Sigmoid colon (tissue), 7 donors: ENCODE measurements at regions of chr1 and their contacts with region 1.

Region 1: DNA sequence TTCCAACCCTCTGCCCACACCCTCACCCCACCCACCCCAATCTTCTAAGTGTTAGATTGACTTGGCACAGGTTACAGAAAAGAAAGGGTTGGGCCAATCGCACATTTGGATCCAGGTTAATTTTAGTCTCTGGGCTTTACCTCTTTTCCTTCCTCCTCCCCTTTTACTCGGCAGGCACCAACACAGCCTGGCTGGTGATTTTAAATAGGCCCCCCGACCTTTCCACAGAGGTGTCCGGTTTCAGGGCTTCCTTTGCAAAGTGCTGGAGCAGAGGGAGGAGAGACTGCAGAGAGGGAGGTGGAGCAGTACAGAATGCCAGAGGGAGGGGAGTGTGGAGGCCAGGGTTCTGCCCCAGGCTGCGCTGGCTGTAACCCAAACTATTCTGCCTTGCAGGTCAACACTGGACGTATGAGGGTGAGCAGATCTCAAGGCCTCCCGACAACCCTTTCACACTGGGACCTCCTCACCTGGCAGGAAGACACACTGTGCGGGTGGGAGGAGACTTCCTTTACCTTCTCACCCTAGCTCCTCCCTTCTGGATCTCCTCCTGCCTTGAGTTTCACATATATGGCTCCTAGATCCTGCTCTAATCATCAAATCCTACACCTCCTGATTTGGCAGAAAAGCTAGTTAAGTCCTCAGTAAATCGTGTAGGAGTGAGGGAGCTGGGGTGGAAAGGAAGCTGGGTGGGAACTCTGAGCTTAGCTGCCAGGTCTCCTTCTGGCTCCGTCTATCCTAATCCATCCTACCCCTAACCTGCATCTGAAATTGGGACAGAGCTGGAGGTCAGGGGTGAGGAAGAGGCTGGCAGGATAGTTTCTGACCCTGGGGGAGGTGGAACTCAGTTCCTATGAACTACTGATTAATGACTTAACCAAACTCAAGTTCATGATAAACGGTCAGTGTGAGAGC is 2.4 kb downstream of the CA14 start:
- DNase-seq: peak; percentile 63
- H3K4me3 ChIP-seq: no peak overlapping the region
- H3K27ac ChIP-seq: peak overlapping the region in 3 of 4 donors; percentile 73 to 79 (median 76)
- H3K4me1 ChIP-seq: peaks cover 0 to 42% (median 14%) of the 10 kb centered on the region in 4 donors
- H3K27me3 ChIP-seq: peaks cover 0 to 14% (median 0%) of the 10 kb centered on the region in 3 donors
- CTCF ChIP-seq: no peak
- EP300 ChIP-seq: no peak
- POLR2A ChIP-seq: no peak

Region 2: GRCh38 chr1:150051089-150051373 is 209.0 kb before region 1 on chr1:
- intact Hi-C with region 1: no loop called
- DNase-seq: no peak
- H3K4me3 ChIP-seq: no peak overlapping the region
- H3K27ac ChIP-seq: no peak overlapping the region
- H3K4me1 ChIP-seq: peaks cover 0 to 9% (median 3%) of the 10 kb centered on the region in 4 donors
- H3K27me3 ChIP-seq: no peaks in the 10 kb centered on the region
- CTCF ChIP-seq: no peak
- EP300 ChIP-seq: no peak
- POLR2A ChIP-seq: no peak

Region 3: DNA sequence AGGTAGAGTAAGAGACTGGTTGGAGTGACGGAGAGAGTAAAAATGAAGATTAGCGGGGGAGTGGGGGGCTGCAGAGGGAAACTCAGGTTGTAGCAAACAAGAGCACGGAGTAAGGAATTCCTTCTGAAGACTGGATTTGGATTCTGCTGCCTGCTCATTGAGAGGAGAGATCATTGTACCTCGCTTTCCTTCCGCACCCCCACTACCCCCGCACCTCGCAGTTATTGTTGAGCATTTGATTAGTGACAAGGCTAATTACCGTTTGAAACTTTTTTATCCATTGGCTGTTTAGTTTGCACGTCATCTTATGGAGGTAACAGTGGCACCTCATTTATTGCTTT is 61.8 kb after region 1 on chr1:
- intact Hi-C with region 1: loop called (anchors 5 kb)
- DNase-seq: no peak
- H3K4me3 ChIP-seq: peak overlapping the region; percentile 68 to 86 (median 78)
- H3K27ac ChIP-seq: peak overlapping the region; percentile 86 to 91 (median 88)
- H3K4me1 ChIP-seq: peaks cover 0 to 22% (median 14%) of the 10 kb centered on the region in 4 donors
- H3K27me3 ChIP-seq: no peaks in the 10 kb centered on the region
- CTCF ChIP-seq: no peak
- EP300 ChIP-seq: no peak
- POLR2A ChIP-seq: no peak